Heart right ventricle (tissue), 16 donors: ENCODE measurements at regions of chr19 and their contacts with region 1.

Region 1: DNA sequence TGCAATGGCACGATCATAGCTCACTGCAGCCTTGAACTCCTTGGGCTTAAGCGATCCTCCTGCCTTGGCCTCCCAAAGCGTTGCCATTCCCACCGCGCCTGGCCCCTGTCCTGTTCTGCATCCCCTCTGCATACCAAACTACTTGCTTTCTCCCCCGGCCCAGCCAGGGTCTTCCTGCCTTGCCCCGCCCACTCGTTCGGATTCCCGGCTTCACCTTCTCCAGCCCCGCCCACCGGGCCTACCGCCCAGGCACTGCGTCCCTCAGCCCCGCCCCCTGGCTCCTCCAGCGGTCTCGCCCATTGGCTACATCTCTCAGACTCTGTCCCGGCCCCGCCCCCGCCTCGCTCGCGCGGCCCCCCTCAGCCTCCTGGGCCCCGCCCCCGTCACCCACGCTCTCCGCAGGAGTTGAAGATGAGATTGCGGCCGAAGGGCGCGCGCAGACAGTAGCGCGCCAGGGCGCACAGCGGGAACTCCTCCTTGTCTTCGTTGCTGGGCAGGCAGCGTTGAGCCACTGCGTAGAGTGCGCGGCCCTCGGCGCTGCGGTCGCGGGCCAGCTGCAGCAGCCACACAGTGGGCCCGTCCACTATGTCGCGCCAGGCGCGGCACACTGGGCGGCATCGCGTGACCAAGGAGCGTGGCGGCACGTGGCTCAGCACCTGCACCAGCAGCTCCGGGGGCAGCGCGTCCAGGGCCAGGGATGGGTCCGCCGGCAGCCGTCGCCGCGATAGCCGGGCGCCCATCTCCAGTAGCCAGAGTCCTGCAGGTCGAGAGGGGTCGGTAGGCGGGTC is 19.0 kb downstream of the MRPS12 start:
- DNase-seq: peak; percentile 87 to 88
- ATAC-seq: peak; percentile 89 to 97 (median 95)
- H3K4me3 ChIP-seq: peak overlapping the region in 9 of 10 donors; percentile 16 to 51 (median 46)
- H3K27ac ChIP-seq: no peak overlapping the region
- H3K4me1 ChIP-seq: peaks cover 0 to 12% (median 8%) of the 10 kb centered on the region in 9 donors
- H3K27me3 ChIP-seq: peaks cover 0 to 22% (median 4%) of the 10 kb centered on the region in 7 donors
- CTCF ChIP-seq: no peak

Region 2: DNA sequence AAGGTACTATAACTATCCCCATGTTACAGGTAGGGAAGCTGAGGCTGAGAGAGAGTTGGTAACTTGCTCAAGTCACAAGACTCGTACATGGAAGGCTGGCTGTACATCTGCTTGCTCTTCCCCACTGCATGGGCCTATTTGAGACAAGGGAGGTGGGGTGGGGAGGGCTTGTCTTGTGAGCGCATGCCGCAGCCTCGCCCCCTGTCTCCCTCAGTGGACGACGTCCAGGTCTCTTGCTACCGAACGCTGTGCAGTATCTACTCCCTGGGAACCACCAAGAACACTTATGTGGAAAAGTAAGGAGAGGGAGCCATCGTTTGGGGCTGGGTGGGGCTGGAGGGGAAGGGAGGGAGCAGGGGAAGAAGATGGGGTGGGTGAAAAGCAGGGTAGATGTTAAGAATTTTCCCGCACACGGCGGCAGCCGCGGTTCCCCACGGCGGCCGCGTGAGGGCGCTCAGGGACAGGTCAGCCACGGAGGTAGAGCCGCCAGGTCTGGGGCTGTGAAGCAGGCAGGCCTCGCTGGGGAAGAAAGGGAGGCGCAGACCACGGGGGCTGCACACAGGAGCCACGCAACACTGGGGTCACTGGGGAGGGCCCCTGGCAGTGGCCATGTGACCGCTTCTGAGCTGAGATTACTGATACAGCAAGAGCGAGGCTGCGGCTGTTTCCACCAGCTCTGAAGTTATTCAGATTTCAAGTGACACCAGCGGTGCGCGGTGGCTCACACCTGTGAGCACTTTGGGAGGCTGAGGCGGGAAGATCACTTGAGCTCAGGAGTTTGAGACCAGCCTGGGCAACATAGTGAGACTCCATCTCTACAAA is 434.8 kb before region 1 on chr19:
- intact Hi-C with region 1: loop called in 1 of 10 experiments (anchors 10 kb)
- DNase-seq: peak; percentile 32 to 67
- ATAC-seq: peak in 7 of 8 donors; percentile 73 to 85 (median 79)
- H3K4me3 ChIP-seq: peak overlapping the region in 1 of 10 donors; percentile 18
- H3K27ac ChIP-seq: no peak overlapping the region
- H3K4me1 ChIP-seq: peaks cover 0 to 7% (median 0%) of the 10 kb centered on the region in 9 donors
- H3K27me3 ChIP-seq: peaks cover 0 to 34% (median 6%) of the 10 kb centered on the region in 7 donors
- CTCF ChIP-seq: peak; percentile 61 to 90 (median 85)

Region 3: GRCh38 chr19:38544034-38544958 is 405.5 kb before region 1 on chr19:
- intact Hi-C with region 1: loop called in 5 of 10 experiments (anchors 5 to 10 kb)
- DNase-seq: peak; percentile 38 to 50
- ATAC-seq: peak; percentile 70 to 86 (median 80)
- H3K4me3 ChIP-seq: peak overlapping the region in 3 of 10 donors; percentile 6 to 17 (median 12)
- H3K27ac ChIP-seq: no peak overlapping the region
- H3K4me1 ChIP-seq: peaks cover 0 to 11% (median 6%) of the 10 kb centered on the region in 9 donors
- H3K27me3 ChIP-seq: no peaks in the 10 kb centered on the region
- CTCF ChIP-seq: peak; percentile 39 to 75 (median 63)